ENCODE measurements at regions of chr11 and their contacts with region 1.

Region 1: GRCh38 chr11:75896843-75897419 is 81.9 kb downstream of the UVRAG start:
- DNase-seq: no peak
- H3K4me3 ChIP-seq: no peak overlapping the region
- H3K27ac ChIP-seq: no peak overlapping the region
- H3K4me1 ChIP-seq: peaks cover 0 to 22% (median 3%) of the 10 kb centered on the region in 4 donors
- H3K27me3 ChIP-seq: no peaks in the 10 kb centered on the region
- CTCF ChIP-seq: peak; percentile 70 to 89 (median 73)
- EP300 ChIP-seq: no peak
- POLR2A ChIP-seq: no peak

Region 2: DNA sequence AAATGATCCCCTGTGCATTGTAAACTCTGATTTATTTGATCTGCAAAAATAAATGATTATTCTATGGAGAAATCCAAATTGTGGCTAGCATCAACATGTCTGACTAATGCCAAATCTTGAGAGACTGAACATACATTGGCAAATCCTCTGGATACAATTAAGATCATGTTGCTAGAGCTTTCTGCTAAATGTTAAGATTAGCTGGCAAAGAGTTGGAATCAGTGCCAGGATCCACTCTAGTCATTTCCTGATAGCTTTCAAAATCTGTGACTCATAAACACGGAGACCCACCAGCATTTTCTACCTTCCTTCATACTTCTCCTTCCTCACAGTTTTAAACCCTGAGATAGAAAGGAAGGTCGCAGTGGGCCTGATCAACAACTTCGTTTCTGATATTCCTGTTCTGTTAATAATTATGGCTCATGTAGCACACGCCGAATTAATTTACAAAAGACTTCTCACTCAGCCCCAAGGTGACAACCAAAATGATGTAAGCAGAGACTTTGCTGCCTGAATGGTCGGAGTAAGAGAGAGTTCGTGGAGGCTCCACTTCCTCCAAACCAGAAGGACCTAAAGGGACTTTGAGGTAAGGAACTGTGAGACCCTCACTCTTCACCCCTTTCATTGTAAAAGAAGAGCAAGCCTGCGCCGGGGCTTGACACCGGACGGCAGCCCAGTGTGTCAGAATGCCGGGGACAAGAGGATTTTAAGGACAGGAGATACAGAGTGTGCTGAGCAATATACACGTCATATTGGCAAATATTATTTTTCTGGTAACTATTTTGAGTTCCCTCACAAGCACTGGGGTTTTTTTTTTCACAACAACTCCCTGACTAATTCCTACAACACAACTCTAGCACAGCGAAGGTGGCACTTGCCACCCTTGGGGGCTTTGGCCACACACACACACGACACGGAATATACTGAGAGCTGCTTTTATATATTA is 292.9 kb before region 1 on chr11:
- in situ Hi-C with region 1: no loop called
- intact Hi-C with region 1: no loop called
- DNase-seq: no peak
- H3K4me3 ChIP-seq: no peak overlapping the region
- H3K27ac ChIP-seq: no peak overlapping the region
- H3K4me1 ChIP-seq: no peaks in the 10 kb centered on the region
- H3K27me3 ChIP-seq: no peaks in the 10 kb centered on the region
- CTCF ChIP-seq: no peak
- EP300 ChIP-seq: no peak
- POLR2A ChIP-seq: no peak

Region 3: GRCh38 chr11:76152086-76152681 is 255.3 kb after region 1 on chr11:
- in situ Hi-C with region 1: loop called (anchors 5 to 10 kb)
- intact Hi-C with region 1: loop called (anchors 1 kb)
- DNase-seq: peak; percentile 89
- H3K4me3 ChIP-seq: peak overlapping the region in 3 of 4 donors; percentile 14 to 36 (median 19)
- H3K27ac ChIP-seq: peak overlapping the region in 3 of 4 donors; percentile 17 to 90 (median 83)
- H3K4me1 ChIP-seq: peaks cover 13 to 48% (median 31%) of the 10 kb centered on the region in 4 donors
- H3K27me3 ChIP-seq: no peaks in the 10 kb centered on the region
- CTCF ChIP-seq: peak; percentile 89 to 98 (median 93)
- EP300 ChIP-seq: no peak
- POLR2A ChIP-seq: no peak

Region 4: DNA sequence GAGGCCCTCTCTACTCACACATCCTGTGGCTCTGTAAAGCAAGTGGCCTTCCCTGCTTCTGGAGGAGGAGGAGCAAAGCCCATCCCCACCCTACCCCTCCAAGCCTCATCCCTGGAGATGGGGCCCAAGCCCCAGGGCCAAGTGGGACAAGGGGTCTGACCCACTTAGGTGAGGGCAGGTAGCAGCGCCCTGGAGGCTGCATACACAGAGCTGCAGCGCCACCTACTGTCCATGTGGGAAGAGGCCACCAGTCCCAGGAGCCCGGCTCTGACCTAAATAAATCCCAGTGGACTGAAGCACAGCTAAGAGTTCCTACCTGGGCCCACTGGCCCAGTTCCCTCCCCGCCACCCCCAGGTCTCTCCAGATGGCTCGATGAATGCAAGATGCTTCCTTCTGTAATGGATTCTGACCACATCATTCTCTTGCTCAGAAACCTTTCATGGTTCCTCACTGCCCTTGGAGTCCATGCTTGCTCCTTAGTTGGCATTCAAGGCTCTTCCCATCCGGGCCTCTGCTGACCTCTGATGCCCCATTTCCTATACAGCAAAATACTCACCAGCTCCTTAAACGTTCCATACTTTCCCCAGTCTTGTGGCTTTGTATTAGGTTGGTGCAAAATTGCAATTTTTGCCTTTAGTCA is 421.9 kb after region 1 on chr11:
- in situ Hi-C with region 1: loop called in 3 of 4 experiments (anchors 10 to 25 kb)
- intact Hi-C with region 1: no loop called
- DNase-seq: peak; percentile 87
- H3K4me3 ChIP-seq: no peak overlapping the region
- H3K27ac ChIP-seq: no peak overlapping the region
- H3K4me1 ChIP-seq: peaks cover 0 to 9% (median 6%) of the 10 kb centered on the region in 4 donors
- H3K27me3 ChIP-seq: peaks cover 27% of the 10 kb centered on the region
- CTCF ChIP-seq: peak; percentile 87 to 97 (median 93)
- EP300 ChIP-seq: no peak
- POLR2A ChIP-seq: no peak

Region 5: DNA sequence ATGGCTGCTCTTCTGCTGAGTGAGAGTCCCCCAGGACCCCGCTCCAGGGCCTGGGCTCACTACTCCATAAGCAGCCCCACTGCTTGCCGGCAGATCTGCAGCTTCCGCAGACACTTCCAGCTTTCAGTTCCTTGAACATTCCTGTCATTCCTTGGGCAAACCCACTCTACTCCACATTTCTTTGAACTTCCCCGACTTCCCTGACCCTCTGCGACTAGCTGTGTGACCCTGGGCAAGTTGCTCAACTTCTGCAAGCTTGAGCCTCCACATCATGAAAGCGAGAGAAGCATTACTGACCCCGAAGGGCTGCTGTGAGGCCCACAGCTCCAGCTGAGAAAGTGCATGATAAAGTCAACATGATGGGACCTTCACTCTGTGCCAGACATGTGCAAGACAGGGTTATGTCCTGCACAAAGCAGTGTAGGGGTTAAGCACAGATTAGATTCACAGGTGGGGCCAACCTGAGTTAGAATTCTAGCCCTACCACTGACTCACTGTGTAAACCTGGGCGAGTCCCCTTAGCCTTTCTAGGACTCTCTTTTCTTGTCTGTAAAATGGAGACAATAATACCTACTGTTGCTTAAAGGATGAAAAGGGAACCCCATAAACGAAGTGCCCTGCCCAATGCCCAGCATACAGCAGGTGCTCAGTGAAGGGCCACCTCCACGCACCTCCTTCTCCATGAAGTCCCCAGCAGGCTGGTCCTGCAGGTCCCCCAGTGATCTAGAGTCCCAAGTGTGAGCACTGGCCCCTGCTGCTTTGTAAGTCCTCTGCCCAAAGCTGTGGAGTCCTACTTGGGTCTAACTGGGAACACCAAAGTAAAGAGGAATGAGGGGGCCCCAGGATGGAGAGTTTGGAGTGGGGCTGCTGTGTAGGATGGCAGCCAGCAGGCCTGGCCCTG is 432.4 kb after region 1 on chr11:
- in situ Hi-C with region 1: loop called in 2 of 4 experiments (anchors 10 to 25 kb)
- intact Hi-C with region 1: no loop called
- DNase-seq: no peak
- H3K4me3 ChIP-seq: no peak overlapping the region
- H3K27ac ChIP-seq: no peak overlapping the region
- H3K4me1 ChIP-seq: no peaks in the 10 kb centered on the region
- H3K27me3 ChIP-seq: no peaks in the 10 kb centered on the region
- CTCF ChIP-seq: no peak
- EP300 ChIP-seq: no peak
- POLR2A ChIP-seq: no peak

Measured in transverse colon (tissue), 4 donors.